Pancreas (tissue), 10 donors: ENCODE measurements at regions of chr19 and their contacts with region 1.

Region 1: DNA sequence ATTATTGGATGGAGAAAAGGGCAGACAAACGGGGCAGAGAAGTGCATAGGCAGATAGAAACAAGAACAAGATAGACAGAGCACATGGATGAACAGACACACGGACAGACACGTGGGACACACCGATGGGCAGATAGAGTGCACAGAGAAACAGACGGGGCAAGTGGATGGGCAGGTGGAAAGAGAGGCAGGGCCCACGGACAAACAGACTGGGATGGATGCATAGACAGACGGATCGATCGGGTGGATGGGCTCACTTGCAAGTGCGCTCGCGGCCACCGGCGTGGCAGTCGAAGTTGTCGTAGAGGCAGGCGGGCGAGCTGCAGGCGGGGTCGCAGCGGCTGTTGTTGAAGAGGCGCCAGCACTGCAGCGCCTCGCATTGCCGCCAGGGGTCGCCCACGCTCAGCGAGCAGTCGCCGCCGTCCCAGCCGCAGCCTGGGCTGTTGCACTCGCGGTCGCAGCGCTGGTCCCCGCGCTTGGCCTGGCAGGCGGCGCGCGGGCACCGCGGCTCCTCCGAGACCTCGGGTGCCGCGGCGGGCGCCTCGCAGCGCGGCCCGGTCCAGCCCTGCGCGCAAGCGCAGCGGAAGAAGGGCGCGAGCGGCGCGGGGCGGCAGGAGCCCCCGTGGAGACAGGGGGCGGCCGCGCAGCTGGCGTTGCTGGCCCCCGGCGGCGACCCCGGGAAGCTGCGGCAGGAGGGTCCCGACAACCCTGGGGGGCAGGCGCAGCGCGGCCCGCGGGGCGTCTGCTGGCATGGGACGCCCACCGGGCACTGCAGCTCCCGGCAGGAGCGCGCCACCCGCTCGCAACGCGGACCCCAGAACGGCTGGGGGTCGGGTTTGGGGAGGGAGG is 23.3 kb downstream of the NOTCH3 start:
- DNase-seq: peak; percentile 61 to 98 (median 84)
- ATAC-seq: peak; percentile 75 to 92 (median 84)
- H3K4me3 ChIP-seq: peak overlapping the region in 1 of 4 donors; percentile 11
- H3K27ac ChIP-seq: no peak overlapping the region
- H3K4me1 ChIP-seq: no peaks in the 10 kb centered on the region
- H3K27me3 ChIP-seq: no peaks in the 10 kb centered on the region
- CTCF ChIP-seq: peak; percentile 90 to 95 (median 94)

Region 2: GRCh38 chr19:15251749-15252397 is 74.4 kb after region 1 on chr19:
- intact Hi-C with region 1: loop called in 1 of 3 experiments (anchors 5 kb)
- DNase-seq: peak in 3 of 6 donors; percentile 53 to 60 (median 53)
- ATAC-seq: peak; percentile 38 to 59 (median 52)
- H3K4me3 ChIP-seq: no peak overlapping the region
- H3K27ac ChIP-seq: peak overlapping the region in 3 of 4 donors; percentile 36 to 73 (median 52)
- H3K4me1 ChIP-seq: peaks cover 0 to 13% (median 4%) of the 10 kb centered on the region in 3 donors
- H3K27me3 ChIP-seq: no peaks in the 10 kb centered on the region
- CTCF ChIP-seq: peak in 2 of 4 donors; percentile 9 to 17

Region 3: DNA sequence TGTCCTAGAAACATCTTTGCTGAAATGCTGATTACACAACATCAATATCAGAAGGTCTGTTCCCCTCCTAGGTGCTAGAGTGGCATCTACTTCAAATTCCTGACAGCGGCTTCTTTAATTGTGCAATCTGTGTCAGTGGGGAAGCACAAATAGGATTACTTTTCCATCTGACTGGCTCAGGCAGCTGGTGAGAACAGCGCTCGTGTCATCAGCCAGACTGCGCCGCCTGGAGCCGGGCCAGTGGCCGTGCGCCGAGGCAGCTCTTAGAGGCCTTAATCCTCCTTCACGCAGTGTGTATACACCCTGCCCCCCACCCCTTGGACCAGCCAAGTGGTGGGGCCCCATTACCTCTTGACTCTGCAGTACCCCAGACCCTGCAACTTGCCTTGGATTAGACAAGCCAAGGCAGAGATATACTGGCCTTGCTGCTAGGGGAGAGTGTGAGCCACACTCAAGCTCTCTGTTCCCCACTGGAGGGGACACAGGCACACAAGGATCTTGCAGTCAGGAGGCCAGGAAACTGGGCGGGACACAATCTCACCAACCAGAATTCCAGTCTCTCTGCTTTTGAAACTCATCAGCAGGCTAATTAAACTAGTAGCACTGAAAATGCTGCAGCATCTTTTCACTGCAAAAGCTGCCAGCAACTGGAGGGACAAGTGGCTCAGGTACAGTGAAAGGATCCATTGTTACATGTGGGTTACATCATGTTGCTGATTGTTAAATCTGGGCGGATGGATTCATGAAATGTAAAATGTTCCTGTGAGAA is 103.6 kb after region 1 on chr19:
- intact Hi-C with region 1: no loop called
- DNase-seq: peak; percentile 61 to 90 (median 73)
- ATAC-seq: peak; percentile 76 to 87 (median 84)
- H3K4me3 ChIP-seq: no peak overlapping the region
- H3K27ac ChIP-seq: peak overlapping the region in 3 of 4 donors; percentile 8 to 73 (median 68)
- H3K4me1 ChIP-seq: peaks cover 44 to 82% (median 45%) of the 10 kb centered on the region in 3 donors
- H3K27me3 ChIP-seq: no peaks in the 10 kb centered on the region
- CTCF ChIP-seq: no peak

Region 4: DNA sequence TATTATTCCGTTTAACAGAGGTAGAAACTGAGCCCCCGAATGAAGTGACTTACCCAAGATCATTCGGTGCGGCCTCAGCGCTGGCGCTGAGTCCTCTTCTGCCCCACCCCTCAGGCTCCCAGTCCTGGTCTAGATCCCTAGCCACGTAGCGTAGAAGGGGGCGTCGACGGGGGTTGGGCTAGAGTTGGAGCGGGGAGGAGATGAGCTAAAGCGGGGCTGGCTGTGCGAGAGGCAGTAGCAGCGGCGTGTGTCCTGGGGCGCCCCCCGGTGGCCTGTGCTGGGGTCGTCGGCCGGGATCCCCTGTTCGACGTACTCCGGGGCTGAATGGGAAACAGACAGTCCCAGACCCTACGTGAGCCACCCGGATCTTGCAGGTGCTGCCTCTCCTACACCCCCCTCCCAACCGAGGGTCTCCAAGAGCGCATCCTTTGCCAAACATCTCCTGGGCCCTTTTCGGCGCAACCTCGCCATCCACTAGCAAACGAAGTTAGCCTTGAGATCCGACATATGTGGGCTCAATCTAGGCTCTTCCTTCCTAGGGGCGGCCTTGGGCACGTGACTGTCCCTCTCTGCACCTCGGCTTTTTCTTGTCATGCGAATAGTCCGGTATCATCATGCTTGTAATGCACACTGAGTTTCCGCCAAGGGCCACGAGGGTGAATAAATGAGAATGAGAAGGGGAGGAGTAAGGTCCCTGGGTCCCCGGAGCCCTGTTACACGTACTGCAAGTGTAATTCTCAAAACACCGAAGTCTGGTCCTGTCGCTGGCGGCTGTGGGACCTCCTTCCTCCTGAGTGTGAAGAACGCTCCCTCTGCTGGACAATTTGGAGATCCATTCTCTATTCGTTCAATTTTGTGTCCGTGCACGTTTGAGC is 378.5 kb after region 1 on chr19:
- intact Hi-C with region 1: loop called (anchors 5 to 10 kb)
- DNase-seq: peak; percentile 69 to 91 (median 82)
- ATAC-seq: peak; percentile 91 to 97 (median 94)
- H3K4me3 ChIP-seq: peak overlapping the region in 1 of 4 donors; percentile 23
- H3K27ac ChIP-seq: peak overlapping the region in 1 of 4 donors; percentile 31
- H3K4me1 ChIP-seq: peaks cover 0 to 8% (median 5%) of the 10 kb centered on the region in 3 donors
- H3K27me3 ChIP-seq: no peaks in the 10 kb centered on the region
- CTCF ChIP-seq: peak; percentile 35 to 66 (median 52)

Region 5: GRCh38 chr19:15563325-15563794 is 385.9 kb after region 1 on chr19:
- intact Hi-C with region 1: loop called (anchors 5 to 10 kb)
- DNase-seq: peak in 5 of 6 donors; percentile 31 to 81 (median 61)
- ATAC-seq: peak; percentile 61 to 96 (median 88)
- H3K4me3 ChIP-seq: no peak overlapping the region
- H3K27ac ChIP-seq: peak overlapping the region in 1 of 4 donors; percentile 4
- H3K4me1 ChIP-seq: no peaks in the 10 kb centered on the region
- H3K27me3 ChIP-seq: no peaks in the 10 kb centered on the region
- CTCF ChIP-seq: no peak